ENCODE measurements at regions of chr2 and their contacts with region 1.

Region 1: DNA sequence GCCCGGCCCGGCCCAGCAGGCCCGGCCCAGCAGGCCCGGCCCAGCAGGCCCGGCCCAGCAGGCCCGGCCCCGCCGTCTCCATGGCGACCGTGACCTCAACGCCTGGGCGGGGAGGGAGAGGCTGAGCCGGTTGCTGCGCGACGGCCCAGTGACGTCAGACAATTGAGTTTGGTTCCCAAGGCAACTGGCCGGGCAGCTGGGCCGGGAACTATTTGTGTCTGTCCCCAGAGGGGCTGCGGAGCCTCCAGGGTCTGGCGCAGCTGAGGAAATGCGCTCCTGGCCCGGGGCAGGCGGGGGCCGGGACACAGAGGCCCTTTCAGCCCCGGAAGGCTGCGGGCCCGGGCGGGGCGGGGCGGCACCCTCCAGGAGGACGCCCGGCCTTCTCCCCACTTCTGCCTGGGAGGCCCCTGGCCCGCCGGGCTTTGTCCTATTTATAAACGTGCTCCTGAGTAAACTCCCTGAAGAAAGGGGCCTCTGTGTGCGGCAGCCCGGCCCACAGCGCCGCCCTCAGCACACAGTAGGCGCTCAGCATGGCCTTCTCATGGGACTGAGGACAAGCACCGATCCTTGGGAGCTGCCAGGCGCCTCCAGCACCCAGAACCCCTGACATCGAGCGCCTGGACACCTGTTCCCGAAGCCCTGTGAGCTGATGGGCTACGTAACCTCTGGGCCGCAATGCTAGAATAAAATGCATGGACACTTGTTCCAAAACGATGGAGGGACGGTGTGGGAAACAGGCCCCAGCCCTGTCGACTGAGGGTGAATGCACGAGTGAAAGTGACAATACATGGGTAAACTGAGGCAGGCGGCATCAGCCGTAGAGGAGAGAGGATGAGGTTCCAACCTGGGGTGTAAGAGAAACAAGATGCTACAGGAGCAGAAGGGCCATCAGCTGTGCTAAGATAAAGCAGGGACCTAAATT is 12.3 kb downstream of the TEX44 start:
- DNase-seq: peak; percentile 100
- ATAC-seq: peak; percentile 94

Region 2: DNA sequence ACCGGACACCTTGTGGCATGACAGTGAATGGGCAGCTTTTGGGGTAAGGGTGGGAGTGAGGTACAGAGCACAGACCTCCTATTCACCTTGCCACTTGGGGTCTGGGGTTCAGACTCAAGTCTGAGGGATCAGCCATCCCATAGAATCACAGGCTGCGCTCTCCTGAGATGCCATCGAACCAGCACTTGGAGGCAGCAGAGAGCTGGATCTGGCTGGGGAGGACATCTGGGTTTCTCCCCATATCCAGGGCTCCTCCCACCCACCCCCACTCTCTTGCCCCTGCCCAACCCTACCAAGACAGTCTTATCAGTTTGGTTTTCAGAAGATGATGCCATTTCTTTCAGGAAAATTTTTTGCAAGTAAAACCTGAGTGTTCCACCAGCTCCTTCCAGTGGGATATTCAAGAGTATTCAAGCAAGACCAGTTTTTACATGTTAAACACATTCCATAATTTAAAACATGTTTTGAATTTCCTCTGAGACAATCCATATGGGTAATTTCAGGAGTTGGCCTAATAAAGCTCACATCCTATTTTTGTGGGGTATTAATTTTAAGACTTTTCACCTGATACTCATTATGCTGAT is 41.5 kb before region 1 on chr2:
- intact Hi-C with region 1: loop called in 1 of 2 experiments (anchors 2 kb)
- DNase-seq: peak; percentile 62
- ATAC-seq: peak; percentile 86 to 94

Region 3: DNA sequence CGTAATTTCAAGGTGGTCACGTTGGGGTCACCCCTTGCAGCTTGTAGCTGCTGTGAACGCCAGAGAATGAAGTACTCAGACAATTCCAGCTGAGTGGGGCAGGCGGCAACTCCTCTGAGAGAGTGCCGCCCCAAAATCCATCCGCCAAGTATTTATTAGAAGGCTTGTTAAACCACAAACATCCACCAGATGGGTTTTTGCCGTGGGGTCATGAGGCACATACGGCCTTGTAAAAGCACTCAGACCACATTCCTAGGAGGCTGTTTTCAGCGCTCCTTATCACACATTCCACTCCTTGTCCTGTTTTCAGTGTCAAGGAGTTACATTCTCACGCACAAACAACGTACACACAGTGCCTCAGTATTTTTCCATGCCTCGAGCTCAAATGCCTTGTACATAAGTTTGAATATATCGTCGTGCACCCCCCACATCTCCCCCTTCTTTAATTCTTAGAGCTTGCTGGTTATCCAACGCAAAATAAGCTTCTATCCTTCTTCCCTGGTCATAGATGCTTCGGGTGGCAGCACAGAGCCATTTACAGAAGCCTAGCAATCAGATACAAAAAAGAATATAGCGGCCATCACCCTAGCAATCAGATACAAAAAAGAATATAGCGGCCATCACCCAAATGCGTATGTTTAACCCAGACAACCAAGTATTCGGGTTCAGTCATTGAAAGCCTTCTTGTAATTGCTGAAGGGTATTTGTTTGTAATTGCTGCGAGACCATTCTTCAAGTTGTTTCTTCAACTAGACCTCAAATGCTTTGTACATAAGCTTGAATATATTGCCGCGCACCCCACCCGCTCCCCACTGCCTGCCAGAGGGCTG is 780.9 kb after region 1 on chr2:
- intact Hi-C with region 1: no loop called
- DNase-seq: no peak
- ATAC-seq: no peak